Heart left ventricle (tissue), 16 donors: ENCODE measurements at regions of chr13 and their contacts with region 1.

Region 1: GRCh38 chr13:98598043-98598442 is 21.1 kb upstream of the STK24 start:
- DNase-seq: no peak
- ATAC-seq: no peak
- H3K4me3 ChIP-seq: no peak overlapping the region
- H3K27ac ChIP-seq: no peak overlapping the region
- H3K4me1 ChIP-seq: no peaks in the 10 kb centered on the region
- H3K27me3 ChIP-seq: no peaks in the 10 kb centered on the region
- CTCF ChIP-seq: peak in 5 of 12 donors; percentile 18 to 35 (median 25)
- POLR2A ChIP-seq: no peak

Region 2: GRCh38 chr13:98542568-98543377 is 55.3 kb before region 1 on chr13:
- intact Hi-C with region 1: no loop called
- DNase-seq: no peak
- ATAC-seq: peak in 3 of 4 donors; percentile 9 to 16 (median 15)
- H3K4me3 ChIP-seq: peak overlapping the region in 9 of 12 donors; percentile 1 to 42 (median 29)
- H3K27ac ChIP-seq: peak overlapping the region in 10 of 12 donors; percentile 21 to 74 (median 49)
- H3K4me1 ChIP-seq: peaks cover 6 to 92% (median 63%) of the 10 kb centered on the region in 12 donors
- H3K27me3 ChIP-seq: no peaks in the 10 kb centered on the region
- CTCF ChIP-seq: no peak
- POLR2A ChIP-seq: no peak

Region 3: GRCh38 chr13:98632961-98633360 is 34.9 kb after region 1 on chr13:
- intact Hi-C with region 1: loop called in 1 of 10 experiments (anchors 5 kb)
- DNase-seq: no peak
- ATAC-seq: no peak
- H3K4me3 ChIP-seq: no peak overlapping the region
- H3K27ac ChIP-seq: peak overlapping the region in 1 of 12 donors; percentile 20
- H3K4me1 ChIP-seq: peaks cover 0 to 10% (median 0%) of the 10 kb centered on the region in 12 donors
- H3K27me3 ChIP-seq: no peaks in the 10 kb centered on the region
- CTCF ChIP-seq: no peak
- POLR2A ChIP-seq: no peak

Region 4: DNA sequence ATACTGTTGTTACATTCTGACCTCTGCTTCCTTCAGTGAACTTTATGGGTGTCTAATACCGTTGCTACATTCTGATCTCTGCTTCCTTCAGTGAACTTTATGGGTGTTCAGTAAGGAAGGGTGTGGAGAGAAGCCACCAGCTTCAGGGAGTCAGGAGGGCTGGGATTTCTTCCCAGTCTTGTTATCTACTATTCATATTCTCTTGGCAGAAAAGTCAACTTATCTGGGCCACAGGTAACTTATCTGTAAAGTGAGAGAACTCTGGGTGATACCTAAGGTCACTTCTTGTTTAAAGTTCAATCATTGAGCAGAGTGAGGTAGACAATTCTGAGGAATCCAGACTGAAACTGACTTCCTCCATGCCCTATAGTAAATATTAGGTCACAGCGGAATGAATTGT is 50.1 kb after region 1 on chr13:
- intact Hi-C with region 1: loop called in 3 of 10 experiments (anchors 5 to 10 kb)
- DNase-seq: no peak
- ATAC-seq: no peak
- H3K4me3 ChIP-seq: no peak overlapping the region
- H3K27ac ChIP-seq: no peak overlapping the region
- H3K4me1 ChIP-seq: peaks cover 0 to 6% (median 0%) of the 10 kb centered on the region in 12 donors
- H3K27me3 ChIP-seq: peaks cover 0 to 6% (median 0%) of the 10 kb centered on the region in 9 donors
- CTCF ChIP-seq: no peak
- POLR2A ChIP-seq: no peak